Left ventricle myocardium inferior (tissue), 1 donor: ENCODE measurements at regions of chr11 and their contacts with region 1.

Region 1: DNA sequence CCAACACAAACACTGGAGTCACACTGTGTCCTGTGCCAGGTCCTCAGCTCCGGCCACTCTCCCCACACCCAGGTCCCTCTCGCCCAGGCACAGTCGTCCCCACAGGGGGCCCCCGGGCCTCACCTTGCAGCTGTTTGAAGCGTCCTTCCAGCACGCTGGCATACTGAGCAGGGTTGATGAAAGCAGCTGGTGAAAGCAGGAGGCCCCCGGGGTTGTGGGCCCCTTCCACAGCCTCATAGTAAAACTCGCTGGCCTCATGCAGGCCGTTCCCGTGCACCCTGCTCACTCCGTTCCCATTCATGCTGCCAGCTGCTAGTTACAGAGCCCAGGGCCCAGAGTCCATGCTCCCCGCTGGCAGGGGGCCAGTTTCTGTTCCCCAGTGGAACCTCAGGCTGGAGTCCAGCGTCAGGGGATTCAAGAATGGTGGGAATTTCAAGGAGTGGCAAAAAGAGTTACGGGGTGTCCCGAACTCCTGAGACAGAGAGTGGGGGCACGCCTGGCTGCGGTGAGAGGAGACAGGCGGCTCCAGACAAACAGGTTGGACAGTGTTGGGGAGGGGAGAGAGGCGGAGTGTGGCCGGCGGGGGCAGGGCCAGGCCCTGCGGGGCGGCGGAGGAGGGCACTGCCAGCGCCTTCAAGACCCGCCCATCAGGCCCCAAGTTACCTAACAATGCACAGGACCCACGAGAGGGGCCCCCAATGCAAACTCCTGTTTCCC is 10.5 kb downstream of the SPTBN2 start:
- DNase-seq: no peak
- H3K4me3 ChIP-seq: no peak overlapping the region
- H3K27ac ChIP-seq: no peak overlapping the region
- H3K4me1 ChIP-seq: no peaks in the 10 kb centered on the region
- H3K27me3 ChIP-seq: peaks cover 47% of the 10 kb centered on the region
- CTCF ChIP-seq: no peak

Region 2: DNA sequence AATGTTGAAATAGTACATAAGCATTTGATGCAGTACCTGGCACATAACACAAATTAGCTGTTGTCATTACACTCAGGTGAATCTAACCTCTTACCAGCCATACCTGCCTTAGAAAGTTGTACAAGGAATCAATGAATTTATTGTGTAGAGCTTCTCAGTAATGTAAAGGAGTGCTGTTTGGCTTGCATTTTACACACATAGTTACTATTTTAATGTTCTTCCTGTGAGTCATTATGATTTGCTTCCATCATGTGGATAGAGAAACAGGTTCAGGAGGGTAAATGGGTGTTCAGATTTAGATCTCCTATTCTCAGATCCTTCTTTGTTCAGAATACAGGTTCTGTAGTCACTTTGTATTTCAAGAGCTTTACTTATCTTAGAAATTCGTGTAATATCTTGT is 97.2 kb after region 1 on chr11:
- intact Hi-C with region 1: loop called (anchors 10 kb)
- DNase-seq: no peak
- H3K4me3 ChIP-seq: no peak overlapping the region
- H3K27ac ChIP-seq: no peak overlapping the region
- H3K4me1 ChIP-seq: no peaks in the 10 kb centered on the region
- H3K27me3 ChIP-seq: no peaks in the 10 kb centered on the region
- CTCF ChIP-seq: no peak